Thyroid gland (tissue), 4 donors: ENCODE measurements at regions of chr14 and their contacts with region 1.

Region 1: DNA sequence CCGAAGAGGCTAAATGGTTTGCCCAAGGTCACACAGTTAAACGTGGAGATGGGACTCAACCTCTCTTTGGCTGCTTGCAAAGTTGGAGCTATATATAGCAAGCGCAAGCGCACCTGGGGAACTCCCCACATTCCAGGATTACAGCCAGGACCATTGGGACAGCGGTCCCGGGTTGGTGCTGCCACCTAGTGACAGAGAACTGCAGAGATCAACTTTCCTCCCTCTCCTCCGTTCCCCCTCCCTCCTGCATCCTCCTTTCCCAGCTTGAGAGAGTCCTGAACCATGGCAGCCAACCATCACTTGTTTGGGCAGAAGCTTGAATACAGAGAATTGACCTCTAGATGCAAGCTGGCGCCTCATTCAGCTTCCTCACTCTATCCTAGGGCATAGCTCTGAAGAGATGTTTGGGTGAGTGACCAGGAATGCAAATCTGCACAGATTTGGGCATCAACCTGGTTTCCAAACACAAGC is 17.4 kb upstream of the FLVCR2 start:
- DNase-seq: peak; percentile 93 to 95
- H3K4me3 ChIP-seq: no peak overlapping the region
- H3K27ac ChIP-seq: no peak overlapping the region
- H3K4me1 ChIP-seq: peaks cover 4 to 14% of the 10 kb centered on the region in 2 donors
- H3K27me3 ChIP-seq: no peaks in the 10 kb centered on the region
- CTCF ChIP-seq: peak; percentile 42 to 95 (median 88)
- POLR2A ChIP-seq: no peak

Region 2: GRCh38 chr14:75307700-75308379 is 253.2 kb before region 1 on chr14:
- intact Hi-C with region 1: loop called (anchors 5 kb)
- DNase-seq: peak; percentile 83 to 88
- H3K4me3 ChIP-seq: no peak overlapping the region
- H3K27ac ChIP-seq: no peak overlapping the region
- H3K4me1 ChIP-seq: peaks cover 16 to 17% of the 10 kb centered on the region in 2 donors
- H3K27me3 ChIP-seq: no peaks in the 10 kb centered on the region
- CTCF ChIP-seq: peak; percentile 71 to 91 (median 86)
- POLR2A ChIP-seq: no peak

Region 3: DNA sequence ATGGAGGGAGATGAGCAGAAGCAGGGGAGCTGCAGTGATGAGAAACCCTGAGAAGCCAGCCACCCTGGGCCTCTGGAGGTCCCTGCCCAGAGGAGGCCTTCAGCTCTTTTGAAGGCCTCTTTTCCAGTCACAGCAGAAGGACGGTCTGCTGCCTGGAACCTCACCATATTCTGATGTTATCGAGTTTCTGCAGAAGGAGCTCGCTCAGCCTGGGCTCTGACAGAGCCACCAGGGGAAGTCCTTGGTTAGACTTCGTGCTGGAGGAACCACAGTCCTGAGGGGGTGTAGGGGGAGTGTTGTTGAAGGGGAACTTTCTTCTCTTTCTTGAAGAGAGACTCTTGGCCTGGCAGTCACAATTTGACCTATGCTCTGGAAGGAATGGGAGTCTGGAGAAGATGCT is 63.8 kb before region 1 on chr14:
- intact Hi-C with region 1: loop called (anchors 10 kb)
- DNase-seq: no peak
- H3K4me3 ChIP-seq: no peak overlapping the region
- H3K27ac ChIP-seq: no peak overlapping the region
- H3K4me1 ChIP-seq: no peaks in the 10 kb centered on the region
- H3K27me3 ChIP-seq: no peaks in the 10 kb centered on the region
- CTCF ChIP-seq: no peak
- POLR2A ChIP-seq: no peak

Region 4: GRCh38 chr14:75514673-75515628 is 46.0 kb before region 1 on chr14:
- intact Hi-C with region 1: loop called (anchors 10 kb)
- DNase-seq: peak; percentile 37 to 53
- H3K4me3 ChIP-seq: no peak overlapping the region
- H3K27ac ChIP-seq: peak overlapping the region in 2 of 3 donors; percentile 42 to 49
- H3K4me1 ChIP-seq: peaks cover 8 to 15% of the 10 kb centered on the region in 2 donors
- H3K27me3 ChIP-seq: no peaks in the 10 kb centered on the region
- CTCF ChIP-seq: peak in 2 of 6 experiments; percentile 18 to 24
- POLR2A ChIP-seq: no peak